Gastrocnemius medialis (tissue), 4 donors: ENCODE measurements at regions of chr18 and their contacts with region 1.

Region 1: GRCh38 chr18:58632552-58632951 is 3.7 kb upstream of the ALPK2 start:
- DNase-seq: peak; percentile 77 to 82
- ATAC-seq: peak; percentile 60
- H3K4me3 ChIP-seq: no peak overlapping the region
- H3K27ac ChIP-seq: peak overlapping the region; percentile 83 to 92 (median 87)
- H3K4me1 ChIP-seq: peaks cover 41 to 85% of the 10 kb centered on the region in 2 donors
- H3K27me3 ChIP-seq: no peaks in the 10 kb centered on the region
- CTCF ChIP-seq: no peak
- POLR2A ChIP-seq: no peak

Region 2: GRCh38 chr18:58556331-58557007 is 76.1 kb before region 1 on chr18:
- in situ Hi-C with region 1: no loop called
- intact Hi-C with region 1: loop called (anchors 5 kb)
- DNase-seq: peak in 1 of 2 donors; percentile 56
- ATAC-seq: peak; percentile 58 to 68
- H3K4me3 ChIP-seq: peak overlapping the region; percentile 5 to 34 (median 9)
- H3K27ac ChIP-seq: peak overlapping the region; percentile 81 to 93 (median 85)
- H3K4me1 ChIP-seq: peaks cover 34 to 39% of the 10 kb centered on the region in 2 donors
- H3K27me3 ChIP-seq: no peaks in the 10 kb centered on the region
- CTCF ChIP-seq: no peak
- POLR2A ChIP-seq: no peak

Region 3: GRCh38 chr18:58937071-58937886 is 304.7 kb after region 1 on chr18:
- in situ Hi-C with region 1: no loop called
- intact Hi-C with region 1: no loop called
- DNase-seq: no peak
- ATAC-seq: peak in 1 of 2 donors; percentile 30
- H3K4me3 ChIP-seq: no peak overlapping the region
- H3K27ac ChIP-seq: peak overlapping the region in 3 of 4 donors; percentile 39 to 45 (median 42)
- H3K4me1 ChIP-seq: peaks cover 7 to 26% of the 10 kb centered on the region in 2 donors
- H3K27me3 ChIP-seq: no peaks in the 10 kb centered on the region
- CTCF ChIP-seq: no peak
- POLR2A ChIP-seq: no peak